GM12878 (cell line): ENCODE measurements at regions of chr1 and their contacts with region 1.

Region 1: GRCh38 chr1:15835741-15836510 is 11.6 kb upstream of the SPEN start:
- DNase-seq: peak; percentile 96
- ATAC-seq: peak; percentile 64
- H3K4me3 ChIP-seq: peak overlapping the region; percentile 87
- H3K27ac ChIP-seq: peak overlapping the region; percentile 100
- H3K4me1 ChIP-seq: peaks cover 25% of the 10 kb centered on the region
- H3K27me3 ChIP-seq: no peaks in the 10 kb centered on the region
- CTCF ChIP-seq: no peak
- EP300 ChIP-seq: no peak
- POLR2A ChIP-seq: peak; percentile 87
- RAD21 ChIP-seq: no peak

Region 2: DNA sequence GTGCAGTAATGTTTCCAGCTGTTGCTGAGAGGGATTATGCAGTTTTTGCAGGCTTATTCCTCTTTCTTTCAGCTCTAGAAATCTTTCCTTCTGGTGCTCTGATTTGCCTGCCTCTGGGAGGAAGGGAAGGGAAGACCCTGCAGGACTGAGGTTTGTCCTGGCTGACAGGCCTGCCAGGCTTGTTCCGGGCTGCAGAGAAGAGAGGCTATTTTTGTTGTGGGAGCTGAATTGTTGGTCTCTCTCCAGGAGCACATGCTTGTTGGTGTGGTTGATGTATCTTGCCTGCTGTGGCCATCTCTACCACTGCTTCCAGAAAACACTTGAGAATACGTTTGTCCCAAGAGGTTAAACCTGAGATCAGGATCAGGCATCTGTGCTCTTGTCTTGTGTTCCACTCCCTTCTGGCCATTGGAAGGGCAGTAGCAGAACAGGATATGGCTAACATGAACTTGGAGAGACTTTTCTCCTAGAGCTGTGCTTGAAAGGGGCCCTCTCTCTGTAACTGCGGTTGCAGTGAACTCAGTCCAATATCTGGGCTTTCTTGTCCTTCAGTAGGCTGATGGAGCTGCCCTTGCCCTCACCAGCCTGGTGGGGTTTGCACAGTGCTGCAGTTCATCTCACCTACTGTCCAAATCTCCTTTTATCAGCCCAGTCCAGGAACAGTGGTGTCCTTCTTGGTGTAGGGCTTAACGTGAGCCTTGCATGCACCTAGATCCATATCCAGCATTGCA is 121.4 kb before region 1 on chr1:
- CTCF ChIA-PET with region 1: no interaction called
- POLR2A ChIA-PET with region 1: no interaction called
- RAD21 ChIA-PET with region 1: no interaction called
- SMC1A ChIA-PET with region 1: no interaction called
- in situ Hi-C with region 1: no loop called
- intact Hi-C with region 1: no loop called
- DNase-seq: no peak
- ATAC-seq: no peak
- H3K4me3 ChIP-seq: no peak overlapping the region
- H3K27ac ChIP-seq: no peak overlapping the region
- H3K4me1 ChIP-seq: no peaks in the 10 kb centered on the region
- H3K27me3 ChIP-seq: no peaks in the 10 kb centered on the region
- CTCF ChIP-seq: no peak
- EP300 ChIP-seq: no peak
- POLR2A ChIP-seq: no peak
- RAD21 ChIP-seq: no peak

Region 3: GRCh38 chr1:15825800-15826199 is 10.1 kb before region 1 on chr1:
- CTCF ChIA-PET with region 1: interaction called, 7 read pairs
- POLR2A ChIA-PET with region 1: interaction called, 12 read pairs
- RAD21 ChIA-PET with region 1: interaction called, 10 read pairs
- SMC1A ChIA-PET with region 1: interaction called, 9 read pairs
- in situ Hi-C with region 1: no loop called
- intact Hi-C with region 1: no loop called
- DNase-seq: no peak
- ATAC-seq: no peak
- H3K4me3 ChIP-seq: no peak overlapping the region
- H3K27ac ChIP-seq: no peak overlapping the region
- H3K4me1 ChIP-seq: peaks cover 15% of the 10 kb centered on the region
- H3K27me3 ChIP-seq: no peaks in the 10 kb centered on the region
- CTCF ChIP-seq: no peak
- EP300 ChIP-seq: no peak
- POLR2A ChIP-seq: no peak
- RAD21 ChIP-seq: no peak

Region 4: DNA sequence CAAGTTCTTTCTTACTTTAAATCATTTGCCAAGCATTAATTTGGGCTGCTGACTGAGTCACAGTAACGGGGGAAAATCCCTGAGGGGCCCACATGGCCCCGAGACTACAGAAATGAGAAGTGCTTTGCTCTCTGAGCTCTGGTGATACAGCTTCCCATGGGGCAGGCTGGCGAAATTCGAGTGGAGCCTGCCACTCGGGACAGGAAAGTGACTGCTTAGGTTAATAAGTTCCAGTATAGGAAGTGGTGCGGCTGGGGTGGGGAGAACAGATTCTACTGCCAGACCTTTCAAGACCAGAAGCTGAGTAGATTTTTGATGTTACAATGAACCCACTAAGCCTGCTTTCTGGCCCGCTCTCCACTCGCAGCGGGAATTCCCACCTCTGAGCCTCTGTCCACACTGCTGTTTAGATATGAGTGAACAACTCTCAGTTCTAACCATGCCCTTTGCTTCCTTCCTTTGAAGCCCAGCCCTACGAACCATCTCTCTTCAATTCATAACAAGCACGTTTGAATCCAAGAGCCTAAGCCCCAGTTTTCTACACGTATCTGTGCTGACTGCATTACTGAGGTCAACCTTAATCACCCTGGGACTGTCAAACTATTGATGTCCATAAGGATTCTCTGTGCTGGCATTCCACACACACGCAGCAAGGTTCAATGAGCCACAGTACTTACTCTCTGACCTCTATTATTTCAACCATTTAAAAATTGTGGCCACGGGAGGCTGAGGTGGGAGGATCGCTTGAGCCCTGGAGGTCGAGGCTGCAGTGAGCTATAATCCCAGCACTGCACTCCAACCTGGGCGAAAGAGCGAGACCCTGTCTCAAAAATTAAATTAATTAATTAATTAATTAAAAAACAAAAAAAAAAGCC is 130.4 kb after region 1 on chr1:
- CTCF ChIA-PET with region 1: interaction called, 5 read pairs
- POLR2A ChIA-PET with region 1: interaction called, 10 read pairs
- RAD21 ChIA-PET with region 1: interaction called, 14 read pairs
- SMC1A ChIA-PET with region 1: interaction called, 4 read pairs
- in situ Hi-C with region 1: no loop called
- intact Hi-C with region 1: no loop called
- DNase-seq: peak; percentile 94
- ATAC-seq: peak; percentile 80
- H3K4me3 ChIP-seq: peak overlapping the region; percentile 43; the same call in 1 of the 2 replicates
- H3K27ac ChIP-seq: peak overlapping the region; percentile 87
- H3K4me1 ChIP-seq: peaks cover 55% of the 10 kb centered on the region
- H3K27me3 ChIP-seq: no peaks in the 10 kb centered on the region
- CTCF ChIP-seq: no peak
- EP300 ChIP-seq: peak; percentile 85 to 93
- POLR2A ChIP-seq: no peak
- RAD21 ChIP-seq: no peak; the same call in 1 of the 2 replicates

Region 5: DNA sequence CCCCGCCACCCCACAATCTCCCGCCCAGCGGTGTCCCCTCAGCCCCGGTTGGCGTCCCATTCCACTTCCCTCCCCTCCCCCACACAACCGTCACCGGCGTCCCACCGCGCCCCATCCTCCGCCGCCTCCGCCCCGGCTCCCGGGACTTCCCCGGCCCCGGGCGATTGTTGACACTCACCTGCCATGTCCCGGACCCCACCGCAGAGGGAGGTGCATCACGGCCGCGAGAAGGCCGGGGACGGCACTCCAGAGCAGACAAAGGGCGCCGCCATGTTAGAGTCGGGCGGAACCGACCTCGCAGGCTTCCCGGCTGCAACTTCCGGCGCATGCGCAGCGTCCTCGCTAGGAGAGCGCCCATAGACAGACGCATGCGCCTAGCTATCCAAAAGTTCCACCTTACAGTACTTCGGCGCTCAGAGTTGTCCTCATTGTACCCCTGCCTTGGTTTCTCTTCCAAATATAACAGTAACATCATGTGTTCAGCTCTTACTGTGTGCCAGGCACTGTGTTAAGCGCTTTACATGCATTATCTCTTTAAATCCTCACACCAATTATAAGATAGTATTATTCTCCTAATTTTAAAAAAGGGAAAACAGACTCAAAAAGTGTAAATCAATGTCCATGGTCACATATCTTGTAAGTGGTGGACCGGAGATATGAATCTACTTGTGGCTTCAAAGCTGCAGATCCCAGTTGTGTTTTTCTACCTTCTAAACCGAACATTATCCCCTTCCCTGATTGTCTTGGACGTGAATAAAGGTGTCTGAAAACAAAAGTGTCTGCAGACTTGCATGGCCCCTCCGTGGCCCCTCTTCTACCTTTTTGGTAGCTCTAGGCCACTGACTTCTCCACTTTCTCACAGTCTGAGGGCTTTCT is 140.1 kb after region 1 on chr1 and contains the start of gene ZBTB17:
- CTCF ChIA-PET with region 1: no interaction called
- POLR2A ChIA-PET with region 1: interaction called, 8 read pairs
- RAD21 ChIA-PET with region 1: interaction called, 20 read pairs
- SMC1A ChIA-PET with region 1: interaction called, 10 read pairs
- in situ Hi-C with region 1: no loop called
- intact Hi-C with region 1: no loop called
- DNase-seq: peak; percentile 79
- ATAC-seq: peak; percentile 82
- H3K4me3 ChIP-seq: peak within 1 kb of the TSS; percentile 95
- H3K27ac ChIP-seq: peak within 1 kb of the TSS; percentile 80
- H3K4me1 ChIP-seq: peaks cover 4% of the 10 kb centered on the region
- H3K27me3 ChIP-seq: no peaks in the 10 kb centered on the region
- CTCF ChIP-seq: no peak
- EP300 ChIP-seq: no peak
- POLR2A ChIP-seq: peak; percentile 78
- RAD21 ChIP-seq: no peak
- polyA plus RNA-seq, gene ZBTB17: 0.87 to 4.3 TPM

Region 6: GRCh38 chr1:15994590-15995351 is 158.8 kb after region 1 on chr1:
- CTCF ChIA-PET with region 1: no interaction called
- POLR2A ChIA-PET with region 1: no interaction called
- RAD21 ChIA-PET with region 1: no interaction called
- SMC1A ChIA-PET with region 1: no interaction called
- in situ Hi-C with region 1: no loop called
- intact Hi-C with region 1: no loop called
- DNase-seq: no peak
- ATAC-seq: peak; percentile 97
- H3K4me3 ChIP-seq: no peak overlapping the region
- H3K27ac ChIP-seq: no peak overlapping the region
- H3K4me1 ChIP-seq: no peaks in the 10 kb centered on the region
- H3K27me3 ChIP-seq: no peaks in the 10 kb centered on the region
- CTCF ChIP-seq: peak; percentile 72 to 83 (median 78)
- EP300 ChIP-seq: no peak
- POLR2A ChIP-seq: no peak
- RAD21 ChIP-seq: peak; percentile 85